Activated T-helper 2 cell treated with anti-CD3 and anti-CD28 coated beads, Interferon-gamma antibody, Interleukin-2, Interleukin-4, amounts not matched to agents 10 μg/mL and 5 μg/mL and 100 μg/mL, durations not matched to agents 14 hours and 24 hours and 36 hours (primary cell): ENCODE measurements at regions of chr7 and their contacts with region 1.

Region 1: GRCh38 chr7:55887821-55888247 is 578 bp downstream of the ZNF713 start:
- DNase-seq: no peak
- H3K4me3 Mint-ChIP-seq: peak overlapping the region; percentile 81
- H3K27ac Mint-ChIP-seq: peak overlapping the region; percentile 74
- H3K4me1 Mint-ChIP-seq: peaks cover 4% of the 10 kb centered on the region
- H3K27me3 Mint-ChIP-seq: no peaks in the 10 kb centered on the region

Region 2: DNA sequence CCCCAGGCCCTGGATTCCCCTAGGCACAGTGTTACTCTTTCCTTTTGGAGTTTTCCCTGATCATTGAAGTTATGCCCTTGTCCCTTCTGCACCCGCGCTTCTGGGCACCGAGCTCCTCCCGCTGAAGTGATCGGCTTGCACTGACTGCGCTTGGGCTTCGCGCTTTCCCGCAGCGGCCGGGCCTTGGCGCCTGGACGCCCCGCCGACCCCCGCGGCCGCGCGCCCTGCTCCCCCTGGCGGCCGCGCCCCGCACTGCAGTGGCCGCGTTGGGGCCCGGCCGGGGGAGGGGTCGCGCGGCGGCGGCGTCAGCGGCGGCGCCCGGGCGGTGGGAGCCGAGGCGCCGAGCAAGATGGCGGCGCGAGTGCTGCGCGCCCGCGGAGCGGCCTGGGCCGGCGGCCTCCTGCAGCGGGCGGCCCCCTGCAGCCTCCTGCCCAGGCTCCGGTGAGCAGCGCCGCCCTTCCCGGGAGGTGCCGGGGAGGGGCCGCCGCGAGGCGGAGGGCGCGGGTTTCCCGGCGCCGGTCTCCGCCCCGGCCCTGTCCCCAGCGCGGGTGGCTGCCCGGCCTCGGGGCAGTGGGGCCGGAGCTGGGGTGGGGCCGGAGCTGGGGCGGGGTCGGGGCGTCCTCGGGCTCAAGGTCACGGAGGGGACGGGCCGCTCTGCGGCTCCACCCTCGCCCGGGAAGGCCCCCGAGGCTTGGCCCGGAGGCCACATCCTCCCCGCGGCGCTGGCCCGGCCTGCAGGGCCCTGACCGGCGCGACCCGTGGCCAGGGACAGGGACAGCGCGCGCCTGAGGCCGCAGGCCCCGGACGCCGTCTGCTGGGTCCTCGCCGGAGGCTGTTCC is 76.6 kb after region 1 on chr7 and contains the start of gene NIPSNAP2:
- intact Hi-C with region 1: no loop called
- DNase-seq: peak; percentile 55
- H3K4me3 Mint-ChIP-seq: peak within 1 kb of the TSS; percentile 86
- H3K27ac Mint-ChIP-seq: peak within 1 kb of the TSS; percentile 73
- H3K4me1 Mint-ChIP-seq: peaks cover 10% of the 10 kb centered on the region
- H3K27me3 Mint-ChIP-seq: no peaks in the 10 kb centered on the region
- total RNA-seq, gene NIPSNAP2: 52.3 and 56.3 TPM in 2 replicates

Region 3: GRCh38 chr7:55977831-55978230 is 90.0 kb after region 1 on chr7:
- intact Hi-C with region 1: no loop called
- DNase-seq: no peak
- H3K4me3 Mint-ChIP-seq: no peak overlapping the region
- H3K27ac Mint-ChIP-seq: no peak overlapping the region
- H3K4me1 Mint-ChIP-seq: no peaks in the 10 kb centered on the region
- H3K27me3 Mint-ChIP-seq: no peaks in the 10 kb centered on the region

Region 4: GRCh38 chr7:56106108-56107073 is 218.6 kb after region 1 on chr7 and contains the start of gene CHCHD2:
- intact Hi-C with region 1: loop called (anchors 1 kb)
- DNase-seq: peak; percentile 93
- H3K4me3 Mint-ChIP-seq: peak within 1 kb of the TSS; percentile 99
- H3K27ac Mint-ChIP-seq: peak within 1 kb of the TSS; percentile 99
- H3K4me1 Mint-ChIP-seq: peaks cover 21% of the 10 kb centered on the region
- H3K27me3 Mint-ChIP-seq: no peaks in the 10 kb centered on the region
- total RNA-seq, gene CHCHD2: 660 TPM in 2 replicates